Ascending aorta (tissue), 2 donors: ENCODE measurements at regions of chr5 and their contacts with region 1.

Region 1: DNA sequence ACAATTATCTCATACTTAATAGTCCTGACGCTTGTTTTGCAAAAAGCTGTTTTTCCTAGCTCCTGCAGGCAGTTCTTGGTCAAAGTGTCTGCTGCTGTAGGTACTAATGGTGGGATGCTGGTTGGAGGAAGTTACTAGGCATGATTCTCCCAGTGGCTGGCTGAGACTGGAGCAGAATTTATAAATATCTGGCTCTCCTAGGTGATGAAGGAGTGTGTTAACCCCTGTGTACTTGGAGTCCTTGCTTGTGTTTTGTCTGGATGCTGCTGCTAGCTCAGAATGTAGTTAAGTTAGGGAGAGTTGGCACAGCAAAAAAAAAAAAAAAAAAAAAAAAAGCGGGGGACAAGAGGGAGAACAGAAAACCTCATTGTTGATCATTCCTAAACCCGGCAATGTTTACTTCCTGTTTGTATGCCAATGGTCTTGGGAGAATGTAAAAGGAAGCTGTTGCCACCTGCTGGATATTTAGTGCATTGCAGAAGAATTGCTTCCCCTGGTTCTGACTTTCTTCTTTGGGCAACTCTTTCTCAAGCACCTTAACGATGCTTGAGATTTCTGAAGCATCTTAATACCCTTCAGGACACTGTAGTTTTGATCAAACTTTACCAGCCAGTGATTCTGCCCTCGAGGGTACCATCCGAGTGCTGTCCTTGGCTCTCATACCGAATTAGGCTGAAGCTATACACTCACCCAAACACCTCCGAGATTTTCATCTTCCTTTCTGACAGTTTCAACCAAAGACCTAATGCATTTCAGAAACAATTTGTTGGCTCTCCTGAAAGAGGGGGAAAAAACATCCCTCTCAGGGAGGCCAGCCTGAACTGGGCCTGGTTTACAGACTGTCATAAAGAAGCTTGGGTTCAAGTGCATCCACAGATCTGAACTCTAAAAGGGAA is 71.7 kb upstream of the WWC1 start:
- DNase-seq: peak in 1 of 2 donors; percentile 74
- H3K4me3 ChIP-seq: peak overlapping the region in 1 of 2 donors; percentile 11
- H3K27ac ChIP-seq: no peak overlapping the region
- H3K4me1 ChIP-seq: no peaks in the 10 kb centered on the region
- H3K27me3 ChIP-seq: no peaks in the 10 kb centered on the region
- CTCF ChIP-seq: peak; percentile 54 to 84 (median 77)

Region 2: DNA sequence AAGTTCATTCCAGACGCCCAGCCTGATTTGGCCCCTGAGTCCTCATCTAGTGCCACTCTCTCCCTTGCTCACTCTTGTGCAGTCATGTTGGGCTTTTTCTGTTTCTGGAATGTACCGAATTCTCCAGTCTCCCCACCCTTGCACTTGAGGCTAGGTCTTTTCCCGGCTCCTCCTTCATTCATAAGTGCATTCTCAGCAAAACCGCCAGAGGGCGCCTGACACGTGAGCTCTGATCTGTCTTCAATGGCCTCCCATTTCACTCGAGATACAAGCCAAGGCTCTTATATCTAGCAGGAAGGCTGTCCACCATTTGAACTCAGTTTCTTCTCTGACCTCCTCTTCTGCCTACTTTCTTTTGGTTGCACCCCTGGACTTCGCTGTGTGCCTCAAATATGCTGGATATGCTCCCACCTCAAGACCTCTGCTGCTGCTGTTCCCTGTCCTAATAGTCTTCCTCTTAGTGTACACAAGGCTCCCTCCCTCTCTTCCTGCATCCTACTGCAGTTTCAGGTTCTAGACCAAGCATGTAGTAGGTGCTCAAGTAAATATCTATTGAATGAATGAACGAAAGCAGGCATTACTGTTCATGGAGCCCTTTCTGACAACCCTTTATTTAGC is 496.4 kb before region 1 on chr5:
- intact Hi-C with region 1: loop called (anchors 1 kb)
- DNase-seq: peak in 1 of 2 donors; percentile 81
- H3K4me3 ChIP-seq: no peak overlapping the region
- H3K27ac ChIP-seq: no peak overlapping the region
- H3K4me1 ChIP-seq: no peaks in the 10 kb centered on the region
- H3K27me3 ChIP-seq: no peaks in the 10 kb centered on the region
- CTCF ChIP-seq: peak; percentile 62 to 91 (median 71)

Region 3: DNA sequence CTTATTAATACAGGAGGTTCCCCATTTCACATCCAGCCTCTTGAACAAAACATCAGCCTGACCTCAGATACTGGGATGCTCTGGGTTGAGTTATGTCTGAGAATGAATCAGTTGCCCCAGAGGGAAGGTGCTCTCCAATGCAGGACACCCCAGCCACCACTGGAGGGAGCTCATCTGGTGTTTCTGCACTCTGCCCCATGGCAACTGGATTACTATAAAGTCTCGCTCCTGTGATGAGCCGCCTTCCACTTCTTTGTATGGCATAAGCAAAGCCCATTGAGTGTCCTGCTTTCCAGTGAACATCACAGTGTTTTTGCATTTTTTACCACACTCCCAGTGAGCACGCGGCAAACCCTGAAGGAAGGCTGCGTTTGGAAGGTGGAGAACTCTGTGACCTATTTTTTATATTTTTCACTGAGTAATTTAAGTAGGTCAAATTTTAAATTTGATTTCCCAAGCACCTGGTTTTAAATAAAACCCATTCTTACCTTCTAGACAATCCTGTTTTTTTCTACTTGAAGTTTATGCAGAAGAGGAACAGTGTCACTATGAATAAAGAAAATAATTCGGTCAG is 105.2 kb before region 1 on chr5:
- intact Hi-C with region 1: loop called (anchors 5 kb)
- DNase-seq: no peak
- H3K4me3 ChIP-seq: no peak overlapping the region
- H3K27ac ChIP-seq: no peak overlapping the region
- H3K4me1 ChIP-seq: no peaks in the 10 kb centered on the region
- H3K27me3 ChIP-seq: no peaks in the 10 kb centered on the region
- CTCF ChIP-seq: peak in 2 of 3 experiments; percentile 8 to 38

Region 4: GRCh38 chr5:168317521-168318147 is 97.9 kb after region 1 on chr5:
- intact Hi-C with region 1: no loop called
- DNase-seq: no peak
- H3K4me3 ChIP-seq: no peak overlapping the region
- H3K27ac ChIP-seq: no peak overlapping the region
- H3K4me1 ChIP-seq: no peaks in the 10 kb centered on the region
- H3K27me3 ChIP-seq: no peaks in the 10 kb centered on the region
- CTCF ChIP-seq: no peak

Region 5: DNA sequence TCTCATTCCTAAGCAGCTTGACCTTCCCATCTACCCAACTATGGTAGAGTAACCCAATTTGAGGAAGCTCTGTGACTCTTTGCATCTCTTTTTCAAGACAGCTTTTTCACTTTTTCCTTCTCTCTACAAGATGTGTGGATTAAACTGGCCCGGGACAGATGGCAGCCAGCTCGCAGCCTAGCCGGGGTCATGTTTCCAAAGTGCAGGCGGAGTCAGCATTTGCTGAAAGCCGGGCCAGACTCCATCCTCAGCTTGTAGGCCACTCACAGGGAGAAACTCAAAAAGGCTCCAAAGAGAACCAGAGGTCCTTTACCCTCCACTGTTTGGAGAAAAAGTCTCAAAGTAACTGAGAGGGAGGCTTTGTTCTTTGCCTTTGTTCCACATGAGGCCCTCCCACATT is 646.2 kb after region 1 on chr5:
- intact Hi-C with region 1: no loop called
- DNase-seq: no peak
- H3K4me3 ChIP-seq: no peak overlapping the region
- H3K27ac ChIP-seq: no peak overlapping the region
- H3K4me1 ChIP-seq: no peaks in the 10 kb centered on the region
- H3K27me3 ChIP-seq: no peaks in the 10 kb centered on the region
- CTCF ChIP-seq: no peak